ENCODE measurements at regions of chr5 and their contacts with region 1.

Region 1: DNA sequence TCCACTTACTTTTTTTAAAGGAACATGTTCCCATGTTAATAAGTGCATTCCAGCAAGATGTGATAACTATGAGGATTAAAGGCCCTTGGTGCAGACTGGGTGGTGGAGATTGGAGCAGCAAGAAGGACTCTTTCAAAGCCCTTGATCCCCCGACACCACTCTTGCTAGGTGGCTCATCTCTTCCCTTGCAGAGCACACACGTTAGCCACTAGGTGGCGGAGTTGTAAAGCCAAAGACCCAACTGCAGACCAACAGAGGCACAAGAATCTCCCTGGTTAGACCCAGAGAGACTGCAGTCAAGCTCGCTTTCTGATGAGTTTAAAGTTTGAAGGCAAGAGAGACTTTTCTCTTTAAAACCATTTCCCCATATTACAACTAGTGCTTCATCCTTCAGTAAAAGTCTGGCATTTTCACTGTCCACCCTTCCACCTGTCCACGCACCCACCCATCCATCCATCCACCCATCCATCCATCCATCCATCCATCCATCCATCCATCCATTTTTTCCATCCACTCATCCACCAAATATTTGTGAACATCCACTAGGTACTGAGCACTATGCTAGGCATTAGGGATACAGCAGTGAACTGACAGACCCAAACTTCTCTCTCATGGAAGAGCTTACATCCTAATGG is 226.9 kb downstream of the MSX2 start:
- DNase-seq: peak; percentile 71
- ATAC-seq: peak; percentile 93
- H3K4me3 ChIP-seq: no peak overlapping the region
- H3K27ac ChIP-seq: no peak overlapping the region
- H3K4me1 ChIP-seq: no peaks in the 10 kb centered on the region
- H3K27me3 ChIP-seq: no peaks in the 10 kb centered on the region
- CTCF ChIP-seq: peak; percentile 86
- EP300 ChIP-seq: no peak
- POLR2A ChIP-seq: no peak
- RAD21 ChIP-seq: peak; percentile 70

Region 2: GRCh38 chr5:174972291-174972690 is 21.0 kb after region 1 on chr5:
- CTCF ChIA-PET with region 1: no interaction called
- POLR2A ChIA-PET with region 1: no interaction called
- in situ Hi-C with region 1: no loop called
- intact Hi-C with region 1: no loop called
- DNase-seq: no peak
- ATAC-seq: no peak
- H3K4me3 ChIP-seq: no peak overlapping the region
- H3K27ac ChIP-seq: no peak overlapping the region
- H3K4me1 ChIP-seq: no peaks in the 10 kb centered on the region
- H3K27me3 ChIP-seq: no peaks in the 10 kb centered on the region
- CTCF ChIP-seq: no peak
- EP300 ChIP-seq: no peak
- POLR2A ChIP-seq: no peak
- RAD21 ChIP-seq: no peak

Region 3: DNA sequence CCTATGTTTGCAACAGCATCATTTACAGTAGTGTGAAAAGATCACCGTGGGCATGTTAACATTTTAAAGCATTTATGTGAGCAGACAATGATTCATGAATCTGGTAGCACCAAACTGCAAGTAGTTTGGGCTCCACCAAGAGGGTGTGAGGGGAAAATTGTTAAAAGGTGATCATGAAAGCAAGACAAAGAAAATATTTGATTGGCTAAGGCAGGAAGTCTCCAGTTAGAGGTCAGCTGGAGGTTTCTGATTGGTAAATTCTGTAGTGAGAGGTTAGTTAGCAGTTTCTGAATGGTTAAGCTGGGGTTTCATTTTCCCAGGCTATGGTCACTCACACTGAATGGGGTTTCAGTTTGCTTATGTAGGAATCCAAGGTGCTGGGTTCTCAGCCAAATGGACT is 506.2 kb after region 1 on chr5:
- CTCF ChIA-PET with region 1: interaction called, 9 read pairs
- POLR2A ChIA-PET with region 1: no interaction called
- in situ Hi-C with region 1: loop called (anchors 5 kb)
- intact Hi-C with region 1: loop called (anchors 5 kb)
- DNase-seq: no peak
- ATAC-seq: no peak
- H3K4me3 ChIP-seq: no peak overlapping the region
- H3K27ac ChIP-seq: no peak overlapping the region
- H3K4me1 ChIP-seq: no peaks in the 10 kb centered on the region
- H3K27me3 ChIP-seq: peaks cover 0 to 18% of the 10 kb centered on the region in 2 experiments; a peak in 3 of 5 replicates
- CTCF ChIP-seq: no peak
- EP300 ChIP-seq: no peak
- POLR2A ChIP-seq: no peak
- RAD21 ChIP-seq: no peak

Region 4: GRCh38 chr5:175464074-175464941 is 513.0 kb after region 1 on chr5:
- CTCF ChIA-PET with region 1: interaction called, 9 read pairs
- POLR2A ChIA-PET with region 1: no interaction called
- in situ Hi-C with region 1: loop called (anchors 5 kb)
- intact Hi-C with region 1: loop called (anchors 5 kb)
- DNase-seq: peak; percentile 60
- ATAC-seq: peak; percentile 96
- H3K4me3 ChIP-seq: no peak overlapping the region
- H3K27ac ChIP-seq: no peak overlapping the region
- H3K4me1 ChIP-seq: peaks cover 18% of the 10 kb centered on the region
- H3K27me3 ChIP-seq: peaks cover 0 to 35% of the 10 kb centered on the region in 2 experiments; a peak in 3 of 5 replicates
- CTCF ChIP-seq: peak; percentile 73
- EP300 ChIP-seq: no peak
- POLR2A ChIP-seq: no peak
- RAD21 ChIP-seq: no peak

Region 5: GRCh38 chr5:175718401-175719108 is 767.3 kb after region 1 on chr5:
- CTCF ChIA-PET with region 1: interaction called, 15 read pairs
- POLR2A ChIA-PET with region 1: no interaction called
- in situ Hi-C with region 1: loop called (anchors 5 kb)
- intact Hi-C with region 1: no loop called
- DNase-seq: no peak
- ATAC-seq: peak; percentile 81
- H3K4me3 ChIP-seq: no peak overlapping the region
- H3K27ac ChIP-seq: no peak overlapping the region
- H3K4me1 ChIP-seq: peaks cover 7% of the 10 kb centered on the region
- H3K27me3 ChIP-seq: peaks cover under 1 to 3% of the 10 kb centered on the region in 2 experiments; a peak in 1 of 5 replicates
- CTCF ChIP-seq: peak; percentile 76
- EP300 ChIP-seq: no peak
- POLR2A ChIP-seq: no peak
- RAD21 ChIP-seq: peak; percentile 54; the same call in 1 of the 2 replicates